Ascending aorta (tissue), 2 donors: ENCODE measurements at regions of chr6 and their contacts with region 1.

Region 1: GRCh38 chr6:75374961-75375400 is 90.4 kb upstream of the TMEM30A start:
- DNase-seq: no peak
- H3K4me3 ChIP-seq: no peak overlapping the region
- H3K27ac ChIP-seq: peak overlapping the region in 1 of 2 donors; percentile 47
- H3K4me1 ChIP-seq: peaks cover 0 to 13% of the 10 kb centered on the region in 2 donors
- H3K27me3 ChIP-seq: no peaks in the 10 kb centered on the region
- CTCF ChIP-seq: no peak

Region 2: GRCh38 chr6:75418233-75418632 is 43.3 kb after region 1 on chr6:
- intact Hi-C with region 1: loop called (anchors 5 kb)
- DNase-seq: no peak
- H3K4me3 ChIP-seq: no peak overlapping the region
- H3K27ac ChIP-seq: no peak overlapping the region
- H3K4me1 ChIP-seq: peaks cover 25 to 47% of the 10 kb centered on the region in 2 donors
- H3K27me3 ChIP-seq: no peaks in the 10 kb centered on the region
- CTCF ChIP-seq: no peak